OCI-LY7 (cell line): ENCODE measurements at regions of chr1 and their contacts with region 1.

Region 1: GRCh38 chr1:169106095-169106920 is at the start of gene ATP1B1:
- DNase-seq: peak; percentile 89
- H3K4me3 ChIP-seq: peak within 1 kb of the TSS; percentile 94
- H3K27ac ChIP-seq: peak within 1 kb of the TSS; percentile 91
- H3K4me1 ChIP-seq: peaks cover 35% of the 10 kb centered on the region
- CTCF ChIP-seq: 0 out of 2 replicates have a peak, but pooled peaks have one; percentile 10
- total RNA-seq, gene ATP1B1: 14.5 and 17.5 TPM in 2 replicates

Region 2: GRCh38 chr1:168225476-168226190 is 880.7 kb before region 1 on chr1 and contains the start of gene SFT2D2:
- CTCF ChIA-PET with region 1: no interaction called
- POLR2A ChIA-PET with region 1: no interaction called
- intact Hi-C with region 1: loop called (anchors 5 kb)
- DNase-seq: peak; percentile 88
- H3K4me3 ChIP-seq: peak within 1 kb of the TSS; percentile 95
- H3K27ac ChIP-seq: peak within 1 kb of the TSS; percentile 47
- H3K4me1 ChIP-seq: peaks cover 42% of the 10 kb centered on the region
- CTCF ChIP-seq: no peak
- total RNA-seq, gene SFT2D2: 20.7 and 22.3 TPM in 2 replicates

Region 3: DNA sequence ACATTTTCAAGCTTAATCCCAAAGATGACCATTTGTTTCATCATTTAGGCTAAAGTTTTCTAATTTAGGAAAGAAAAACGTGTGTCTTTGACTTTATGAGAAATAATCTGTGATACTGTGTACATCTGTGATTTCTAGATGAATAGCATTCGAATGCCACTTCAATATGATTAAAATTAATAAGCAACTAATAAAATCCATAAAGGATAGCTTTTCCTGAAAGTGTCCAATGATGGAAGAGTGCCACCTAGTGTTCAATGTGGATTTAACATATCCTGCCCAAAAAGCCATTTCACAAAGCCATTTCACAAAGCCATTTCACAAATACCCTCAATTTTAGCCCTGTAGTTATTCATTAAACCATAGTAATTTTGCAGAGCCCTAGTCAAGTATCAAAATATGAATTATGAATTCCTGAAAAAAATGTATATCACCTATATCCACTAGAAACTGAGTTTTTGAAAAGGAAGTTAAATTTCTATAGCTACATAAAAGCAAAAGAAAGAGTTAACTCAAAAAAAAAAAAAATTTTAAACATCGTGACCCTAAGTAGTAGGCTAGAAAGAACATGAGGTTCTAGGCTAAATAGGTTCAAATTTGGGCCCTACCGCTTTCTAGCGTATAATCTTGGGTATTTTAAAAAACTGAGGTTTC is 242.2 kb after region 1 on chr1:
- CTCF ChIA-PET with region 1: interaction called, 5 read pairs
- POLR2A ChIA-PET with region 1: interaction called, 3 read pairs
- intact Hi-C with region 1: loop called (anchors 5 kb)
- DNase-seq: peak; percentile 66
- H3K4me3 ChIP-seq: no peak overlapping the region
- H3K27ac ChIP-seq: no peak overlapping the region
- H3K4me1 ChIP-seq: no peaks in the 10 kb centered on the region
- CTCF ChIP-seq: peak; percentile 96

Region 4: GRCh38 chr1:169485544-169486278 is 379.4 kb after region 1 on chr1 and contains the start of gene SLC19A2:
- CTCF ChIA-PET with region 1: no interaction called
- POLR2A ChIA-PET with region 1: no interaction called
- intact Hi-C with region 1: loop called (anchors 5 kb)
- DNase-seq: peak; percentile 96
- H3K4me3 ChIP-seq: peak within 1 kb of the TSS; percentile 76
- H3K27ac ChIP-seq: no peak within 1 kb of the TSS
- H3K4me1 ChIP-seq: peaks cover 10% of the 10 kb centered on the region
- CTCF ChIP-seq: peak; percentile 24
- total RNA-seq, gene SLC19A2: 3.2 TPM in 2 replicates

Region 5: DNA sequence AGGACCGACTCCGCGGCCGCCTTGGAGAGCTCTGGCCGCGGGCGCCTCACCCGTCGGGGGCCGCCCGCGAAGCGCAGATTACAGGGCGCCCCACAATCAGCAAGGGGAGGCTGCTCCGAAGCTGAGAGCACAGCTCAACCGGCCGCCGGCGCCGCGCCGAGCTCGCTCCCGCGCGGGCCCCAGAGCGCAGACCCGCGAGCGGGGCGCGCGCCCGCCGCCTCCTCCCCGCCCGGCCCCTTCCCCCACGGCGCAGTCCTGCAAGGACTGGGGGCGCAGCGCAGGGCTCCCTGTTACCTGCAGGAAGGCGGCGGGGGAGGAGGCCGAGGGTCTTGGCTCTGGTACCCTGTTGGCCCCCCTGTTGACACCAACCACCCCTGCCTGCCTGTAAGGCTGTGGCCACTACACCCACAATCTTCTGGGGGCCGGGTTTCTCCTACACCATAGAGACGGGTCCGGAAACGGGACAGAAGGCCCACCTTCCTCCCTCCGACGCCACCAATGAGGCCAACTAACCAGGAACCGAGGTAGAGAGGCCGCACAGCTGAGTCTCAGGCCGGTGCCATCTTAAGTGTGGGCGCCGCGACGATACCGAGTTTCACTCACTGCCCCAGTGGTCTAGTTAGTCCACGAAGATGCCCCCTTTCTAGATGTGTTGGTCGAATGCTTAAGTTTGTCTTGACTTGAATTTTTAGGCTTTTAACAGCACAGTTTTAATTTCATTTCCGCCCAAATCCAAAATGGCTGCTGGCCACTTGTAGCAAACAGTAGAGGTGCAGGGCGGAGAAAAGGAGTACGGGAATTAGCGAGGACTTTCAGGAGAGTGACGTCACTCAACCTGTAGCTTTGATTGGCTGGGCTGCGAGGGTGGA is 787.4 kb after region 1 on chr1 and contains the start of gene SCYL3:
- CTCF ChIA-PET with region 1: no interaction called
- POLR2A ChIA-PET with region 1: no interaction called
- intact Hi-C with region 1: loop called (anchors 5 kb)
- DNase-seq: peak; percentile 98
- H3K4me3 ChIP-seq: peak within 1 kb of the TSS; percentile 81
- H3K27ac ChIP-seq: peak within 1 kb of the TSS; percentile 64
- H3K4me1 ChIP-seq: peaks cover 27% of the 10 kb centered on the region
- CTCF ChIP-seq: no peak
- total RNA-seq, gene SCYL3: 5.9 and 7.3 TPM in 2 replicates